OCI-LY7 (cell line): ENCODE measurements at regions of chr17 and their contacts with region 1.

Region 1: DNA sequence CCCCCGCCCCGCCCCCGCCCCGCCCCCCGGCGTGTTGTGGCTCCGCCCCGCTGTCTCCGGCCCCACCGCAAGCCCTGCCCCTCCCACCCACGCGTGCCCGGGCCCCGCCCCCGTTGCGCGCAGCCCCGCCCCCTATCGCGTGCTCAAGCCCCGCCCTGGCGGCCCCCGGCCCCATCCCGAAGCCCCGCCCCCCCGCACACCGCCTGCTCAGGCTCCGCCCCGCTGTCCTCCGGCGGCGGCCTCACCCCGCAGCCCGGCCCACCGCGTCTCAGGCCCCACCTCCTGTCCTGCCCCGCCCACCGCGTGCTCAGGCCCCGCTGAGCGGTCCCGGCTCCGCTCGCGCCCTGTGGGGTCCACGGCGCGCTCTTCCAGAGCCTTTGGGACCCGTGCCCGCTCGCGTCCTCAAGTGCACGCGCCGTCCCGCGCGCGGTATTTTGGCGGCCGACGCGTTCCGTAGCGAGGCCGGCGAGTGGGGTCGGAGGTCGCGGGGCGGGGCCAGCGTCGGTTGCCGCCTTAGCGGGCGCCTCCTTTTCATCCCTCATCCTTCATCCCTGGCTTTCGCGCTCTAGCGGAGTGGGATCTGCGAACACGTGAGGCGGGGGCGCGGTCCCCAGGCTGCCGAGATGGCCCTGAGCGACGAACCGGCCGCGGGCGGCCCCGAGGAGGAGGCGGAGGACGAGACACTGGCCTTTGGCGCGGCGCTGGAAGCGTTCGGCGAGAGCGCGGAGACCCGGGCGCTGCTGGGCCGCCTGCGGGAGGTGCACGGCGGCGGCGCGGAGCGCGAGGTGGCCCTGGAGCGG is at the start of gene TBCD:
- DNase-seq: peak; percentile 93
- H3K4me3 ChIP-seq: peak within 1 kb of the TSS; percentile 84
- H3K27ac ChIP-seq: peak within 1 kb of the TSS; percentile 64
- H3K4me1 ChIP-seq: peaks cover 31% of the 10 kb centered on the region
- CTCF ChIP-seq: no peak
- total RNA-seq, gene TBCD: 57.0 and 87.8 TPM in 2 replicates

Region 2: GRCh38 chr17:82648166-82648668 is 103.6 kb before region 1 on chr17 and contains the start of gene WDR45B:
- CTCF ChIA-PET with region 1: no interaction called
- POLR2A ChIA-PET with region 1: interaction called, 5 read pairs
- intact Hi-C with region 1: loop called (anchors 1 kb)
- DNase-seq: peak; percentile 99
- H3K4me3 ChIP-seq: peak within 1 kb of the TSS; percentile 90
- H3K27ac ChIP-seq: peak within 1 kb of the TSS; percentile 89
- H3K4me1 ChIP-seq: peaks cover 14% of the 10 kb centered on the region
- CTCF ChIP-seq: no peak
- total RNA-seq, gene WDR45B: 59.0 and 61.7 TPM in 2 replicates

Region 3: DNA sequence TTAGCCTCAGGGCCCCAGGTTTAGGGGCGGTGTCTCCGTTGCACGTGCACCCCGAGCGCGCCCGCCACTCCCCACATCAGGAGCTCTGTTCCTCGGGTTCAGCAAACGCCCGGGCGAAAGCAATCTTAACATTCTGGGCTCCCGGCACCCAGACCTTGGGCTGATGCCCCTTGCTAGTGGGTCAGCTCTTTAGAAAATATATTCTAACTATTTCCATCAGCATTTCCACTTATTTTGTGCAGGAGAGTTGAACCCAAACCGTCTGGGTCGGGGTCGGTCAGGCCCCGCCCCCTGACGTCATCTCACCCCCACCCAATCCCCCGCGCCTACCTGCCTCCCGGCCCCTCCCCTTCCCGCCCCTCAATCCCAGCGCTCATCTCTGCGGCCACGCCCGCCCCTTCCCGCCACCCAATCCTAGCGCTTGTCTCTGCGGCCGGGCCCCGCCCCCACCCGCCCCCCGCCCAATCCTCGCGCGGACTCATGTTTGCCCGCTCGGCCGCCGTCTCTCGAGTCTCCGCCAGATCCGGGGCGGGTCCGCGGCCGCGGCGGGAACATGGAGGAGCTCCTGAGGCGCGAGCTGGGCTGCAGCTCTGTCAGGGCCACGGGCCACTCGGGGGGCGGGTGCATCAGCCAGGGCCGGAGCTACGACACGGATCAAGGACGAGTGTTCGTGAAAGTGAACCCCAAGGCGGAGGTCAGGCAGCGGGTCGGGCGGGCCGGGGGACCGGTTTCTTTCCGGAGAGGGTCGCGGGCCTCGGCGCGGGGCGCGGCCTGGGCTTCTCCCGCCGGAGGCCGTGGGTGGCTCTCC is 35.4 kb before region 1 on chr17 and contains the start of gene FN3KRP:
- CTCF ChIA-PET with region 1: no interaction called
- POLR2A ChIA-PET with region 1: interaction called, 3 read pairs
- intact Hi-C with region 1: loop called (anchors 2 kb)
- DNase-seq: peak; percentile 98
- H3K4me3 ChIP-seq: peak within 1 kb of the TSS; percentile 89
- H3K27ac ChIP-seq: peak within 1 kb of the TSS; percentile 40
- H3K4me1 ChIP-seq: peaks cover 24% of the 10 kb centered on the region
- CTCF ChIP-seq: no peak
- total RNA-seq, gene FN3KRP: 52.1 and 56.5 TPM in 2 replicates

Region 4: GRCh38 chr17:82836823-82837357 is 85.1 kb after region 1 on chr17:
- CTCF ChIA-PET with region 1: no interaction called
- POLR2A ChIA-PET with region 1: no interaction called
- intact Hi-C with region 1: no loop called
- DNase-seq: no peak
- H3K4me3 ChIP-seq: no peak overlapping the region
- H3K27ac ChIP-seq: no peak overlapping the region
- H3K4me1 ChIP-seq: no peaks in the 10 kb centered on the region
- CTCF ChIP-seq: no peak